Dendritic cell treated with granulocyte-macrophage colony-stimulating factor and Interleukin-4, amounts not matched to agents 40 ng/mL and 50 ng/mL, for 4 days (primary cell): ENCODE measurements at regions of chr22 and their contacts with region 1.

Region 1: DNA sequence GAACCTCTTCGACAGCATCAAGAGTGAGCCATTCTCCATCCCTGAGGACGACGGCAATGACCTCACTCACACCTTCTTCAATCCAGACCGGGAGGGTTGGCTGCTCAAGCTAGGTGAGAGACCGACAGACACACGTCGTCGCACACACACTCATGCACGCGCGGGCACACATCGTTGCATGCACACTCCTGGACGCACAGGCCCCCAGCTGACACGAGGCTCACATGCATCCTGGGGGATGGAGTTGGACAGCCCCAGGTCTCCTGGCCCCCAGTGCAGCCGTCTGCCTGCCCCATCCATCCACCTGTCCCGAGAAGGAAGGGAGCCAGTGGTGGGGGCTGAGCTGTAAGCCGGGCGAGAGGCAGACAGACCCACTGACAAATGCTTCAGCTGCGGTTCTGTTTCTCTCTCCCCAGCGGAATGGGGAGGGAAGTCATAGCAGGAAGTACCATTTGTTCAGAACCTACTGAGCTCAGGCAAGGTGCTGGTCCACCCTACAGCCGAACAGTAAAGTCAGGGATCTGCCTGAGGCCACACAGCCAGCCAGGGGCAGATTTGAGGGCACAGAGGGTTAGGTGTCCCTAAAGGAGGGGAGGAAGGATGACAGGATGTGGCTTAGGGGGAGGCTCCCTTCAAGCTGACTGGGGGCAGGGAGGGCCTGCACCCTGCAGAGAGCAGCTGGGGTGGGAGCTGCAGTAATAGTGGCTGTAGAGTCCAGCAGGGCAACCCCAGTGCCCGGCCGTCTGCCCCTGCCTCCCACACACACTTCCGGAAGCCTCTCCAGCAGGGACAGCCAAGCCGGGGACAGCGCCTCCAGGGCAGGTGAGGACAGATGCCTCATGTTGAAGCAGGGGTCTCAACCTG is 27.1 kb downstream of the CYTH4 start:
- H3K4me3 Mint-ChIP-seq: peak overlapping the region; percentile 31
- H3K27ac Mint-ChIP-seq: peak overlapping the region; percentile 89
- H3K4me1 Mint-ChIP-seq: peaks cover 100% of the 10 kb centered on the region
- H3K27me3 Mint-ChIP-seq: no peaks in the 10 kb centered on the region

Region 2: DNA sequence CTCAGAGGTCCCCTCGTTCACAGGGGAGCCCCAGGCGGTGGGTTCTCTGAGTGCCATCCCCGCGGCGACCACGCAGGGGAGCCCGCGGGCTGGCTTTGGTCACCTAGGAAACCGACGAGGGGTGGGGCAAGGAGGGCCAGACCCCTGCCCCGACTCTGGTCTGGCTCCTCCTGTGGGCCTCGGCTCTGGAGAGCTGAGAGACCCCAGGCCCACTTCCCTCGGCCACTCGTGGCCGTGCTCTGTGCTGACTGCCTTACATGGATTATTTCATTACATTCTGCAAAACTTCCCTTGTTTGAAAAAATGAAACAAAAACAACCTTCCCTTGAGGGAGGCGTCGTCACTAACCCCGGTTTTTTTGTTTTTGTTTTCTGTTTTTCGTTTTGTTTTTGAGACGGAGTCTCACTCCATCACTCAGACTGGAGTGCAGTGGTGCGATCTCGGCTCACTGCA is 42.3 kb before region 1 on chr22:
- intact Hi-C with region 1: loop called (anchors 2 kb)
- H3K4me3 Mint-ChIP-seq: peak overlapping the region; percentile 70
- H3K27ac Mint-ChIP-seq: peak overlapping the region; percentile 91
- H3K4me1 Mint-ChIP-seq: peaks cover 61% of the 10 kb centered on the region
- H3K27me3 Mint-ChIP-seq: peaks cover 9% of the 10 kb centered on the region

Region 3: DNA sequence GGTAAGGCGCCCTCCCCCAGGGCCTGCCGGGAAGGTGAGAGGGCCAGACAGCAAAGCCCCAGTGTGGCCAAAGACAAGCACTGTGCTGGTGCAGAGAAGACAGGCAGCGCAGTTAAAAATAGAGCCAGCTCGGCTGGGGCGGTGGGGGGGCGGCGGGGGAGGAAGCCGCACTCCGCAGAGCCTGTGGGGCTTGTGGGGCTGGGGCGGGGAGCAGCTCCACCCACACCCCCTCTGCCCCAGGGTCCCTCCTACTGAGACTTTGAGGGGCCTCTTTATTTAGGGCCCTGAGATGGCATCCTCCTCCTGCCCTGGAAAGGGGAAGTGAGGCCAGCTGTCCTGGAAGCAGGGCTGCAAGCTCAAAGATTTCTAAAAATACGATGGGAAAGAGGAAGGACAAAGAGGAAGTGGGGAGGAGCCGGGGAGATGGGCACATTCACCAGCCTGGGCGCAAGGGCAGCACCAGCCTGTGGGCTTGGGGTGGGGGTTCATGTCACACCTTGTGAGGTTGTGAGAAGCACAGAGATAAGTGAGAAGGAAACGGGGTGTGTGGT is 24.6 kb before region 1 on chr22:
- intact Hi-C with region 1: loop called (anchors 1 kb)
- H3K4me3 Mint-ChIP-seq: peak overlapping the region; percentile 99
- H3K27ac Mint-ChIP-seq: peak overlapping the region; percentile 93
- H3K4me1 Mint-ChIP-seq: peaks cover 87% of the 10 kb centered on the region
- H3K27me3 Mint-ChIP-seq: no peaks in the 10 kb centered on the region